Heart right ventricle (tissue), 16 donors: ENCODE measurements at regions of chr6 and their contacts with region 1.

Region 1: DNA sequence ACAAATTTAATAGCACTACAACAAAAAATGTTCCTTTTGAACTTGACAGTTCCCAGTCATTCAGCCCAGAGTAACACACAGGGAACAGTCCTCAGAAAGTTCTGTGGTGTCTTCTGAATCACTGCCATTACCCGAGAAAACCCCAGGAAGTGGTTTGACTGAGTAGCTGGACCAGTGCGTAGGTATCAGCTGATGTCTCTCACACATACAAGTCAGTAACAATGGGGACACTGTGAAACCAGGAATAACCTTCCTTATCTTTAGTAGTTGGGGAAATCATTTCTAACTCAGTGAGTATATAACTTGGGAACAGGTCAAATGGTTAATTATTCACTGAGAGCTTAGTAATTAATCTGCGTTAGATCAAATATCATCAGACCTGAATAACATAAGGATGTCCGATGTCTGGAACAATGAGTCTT is 73.1 kb downstream of the HIVEP2 start:
- DNase-seq: peak in 1 of 2 donors; percentile 56
- ATAC-seq: peak; percentile 60 to 93 (median 84)
- H3K4me3 ChIP-seq: peak overlapping the region in 1 of 10 donors; percentile 5
- H3K27ac ChIP-seq: peak overlapping the region; percentile 5 to 77 (median 56)
- H3K4me1 ChIP-seq: peaks cover 6 to 80% (median 65%) of the 10 kb centered on the region in 9 donors
- H3K27me3 ChIP-seq: no peaks in the 10 kb centered on the region
- CTCF ChIP-seq: no peak

Region 2: GRCh38 chr6:142845624-142846458 is 26.1 kb before region 1 on chr6:
- intact Hi-C with region 1: loop called in 3 of 10 experiments (anchors 2 kb)
- DNase-seq: peak; percentile 92 to 93
- ATAC-seq: peak; percentile 91 to 97 (median 94)
- H3K4me3 ChIP-seq: peak overlapping the region in 9 of 10 donors; percentile 1 to 51 (median 37)
- H3K27ac ChIP-seq: peak overlapping the region; percentile 69 to 92 (median 80)
- H3K4me1 ChIP-seq: peaks cover 25 to 98% (median 88%) of the 10 kb centered on the region in 9 donors
- H3K27me3 ChIP-seq: no peaks in the 10 kb centered on the region
- CTCF ChIP-seq: peak in 2 of 9 donors; percentile 26 to 38